GM10248 (cell line): ENCODE measurements at regions of chr3 and their contacts with region 1.

Region 1: GRCh38 chr3:10322352-10322710 is 1.4 kb upstream of the SEC13 start:
- DNase-seq: peak; percentile 62
- CTCF ChIP-seq: peak; percentile 54

Region 2: DNA sequence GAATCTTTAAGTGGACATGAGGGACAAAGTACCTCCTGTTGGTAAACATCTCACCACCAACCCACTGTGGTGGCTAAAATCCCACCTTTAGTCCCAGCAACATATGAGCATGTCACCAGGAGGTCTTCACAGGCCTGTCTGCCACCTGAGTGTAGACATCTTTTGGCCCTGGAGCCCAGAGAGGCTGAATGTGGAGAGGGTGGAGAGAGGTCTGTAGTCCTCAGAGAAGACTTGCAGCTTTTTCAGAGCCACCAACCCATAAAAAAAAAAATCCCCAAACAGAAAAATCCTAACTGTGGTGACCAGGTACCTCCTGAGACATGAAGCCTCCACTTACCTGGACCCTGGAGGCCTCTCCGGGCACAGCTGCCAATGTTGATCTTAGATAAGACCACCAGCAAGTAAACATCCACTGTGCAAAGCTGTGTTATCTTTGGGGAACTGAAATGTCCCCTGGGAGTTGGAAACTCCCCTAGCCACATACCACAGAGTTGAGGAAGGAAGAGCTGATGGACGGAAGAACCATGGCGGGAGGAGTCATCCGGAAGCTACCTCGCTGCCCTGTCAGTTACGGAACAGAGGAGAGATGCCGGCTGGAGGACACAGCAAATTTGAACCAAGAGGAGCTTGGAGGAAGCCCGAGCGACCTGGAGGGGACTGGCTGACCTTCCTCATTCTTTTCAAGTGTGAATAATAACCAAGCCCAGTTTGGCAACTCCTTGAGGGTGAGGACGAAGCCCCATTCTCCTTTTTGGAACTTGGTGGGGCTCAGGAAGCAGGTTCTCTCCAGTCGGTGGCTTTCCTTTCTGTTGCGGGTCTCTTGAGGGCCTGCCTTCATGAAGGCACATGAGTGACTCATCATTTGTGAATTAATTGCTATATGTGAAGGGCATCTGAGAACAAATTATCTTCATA is 29.6 kb before region 1 on chr3 and contains the start of gene GHRL:
- CTCF ChIA-PET with region 1: interaction called, 10 read pairs
- POLR2A ChIA-PET with region 1: no interaction called
- DNase-seq: peak; percentile 74
- CTCF ChIP-seq: no peak

Region 3: DNA sequence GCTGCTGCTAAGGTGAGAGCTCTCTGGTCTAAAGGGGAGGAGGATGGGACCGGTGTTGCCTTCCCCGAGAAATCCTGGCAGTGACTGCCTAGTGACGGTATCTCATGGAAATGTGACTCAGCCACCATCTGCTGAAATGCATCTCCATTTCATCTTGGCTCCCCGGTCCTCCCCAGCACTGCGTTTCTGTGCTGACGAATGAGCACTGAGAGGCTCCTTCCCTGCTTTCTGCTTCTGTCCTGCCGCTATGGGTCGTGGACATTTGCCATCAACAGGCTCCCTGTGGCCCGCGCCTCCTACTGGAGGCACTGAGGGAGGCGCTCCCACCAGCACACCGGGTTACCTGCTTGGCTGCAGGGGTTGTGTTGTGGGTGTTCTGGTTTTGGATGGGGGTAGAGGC is 12.1 kb after region 1 on chr3:
- CTCF ChIA-PET with region 1: interaction called, 10 read pairs
- POLR2A ChIA-PET with region 1: no interaction called
- DNase-seq: no peak
- CTCF ChIP-seq: no peak

Region 4: GRCh38 chr3:10352146-10352911 is 30.0 kb after region 1 on chr3:
- CTCF ChIA-PET with region 1: no interaction called
- POLR2A ChIA-PET with region 1: no interaction called
- DNase-seq: no peak
- CTCF ChIP-seq: no peak